Activated naive CD8-positive, alpha-beta T cell treated with anti-CD3 and anti-CD28 coated beads, Interleukin-2, amount 10 ng/mL, durations not matched to agents 7 days and 5 days (primary cell): ENCODE measurements at regions of chr6 and their contacts with region 1.

Region 1: DNA sequence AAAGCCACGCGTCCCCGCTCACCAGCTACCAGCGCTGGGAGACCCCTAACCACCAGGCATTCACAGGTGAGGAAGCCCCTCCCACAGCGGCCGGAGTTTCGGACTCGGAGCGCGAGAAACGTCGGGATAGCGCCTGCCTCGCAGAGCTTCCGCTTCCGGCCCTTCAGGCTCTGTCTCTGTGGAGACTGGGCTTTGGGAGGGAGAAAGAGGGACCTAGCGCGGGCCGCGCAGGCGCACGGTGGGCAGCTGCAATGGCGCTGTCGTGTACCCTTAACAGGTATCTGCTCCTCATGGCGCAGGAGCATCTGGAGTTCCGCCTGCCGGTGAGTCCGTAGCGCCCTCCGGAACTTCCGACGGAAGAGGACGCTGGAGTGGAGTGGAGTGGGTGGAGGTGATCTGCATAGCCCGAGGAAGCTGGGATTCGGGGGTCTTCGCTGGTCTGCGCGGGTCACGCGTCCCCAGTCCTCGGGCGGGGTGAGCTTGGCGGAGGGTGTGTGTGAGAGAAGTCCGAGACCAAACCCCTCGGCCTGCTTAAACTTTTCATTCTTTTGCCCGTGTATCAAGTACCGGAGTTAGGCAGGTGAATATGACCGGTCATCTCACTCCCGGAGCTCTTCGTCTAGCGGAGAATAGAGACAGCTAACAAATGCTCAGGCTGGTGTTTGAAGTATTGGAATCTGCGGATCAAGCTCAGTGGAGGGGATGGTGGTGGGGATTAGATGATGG is at the start of gene TRMT11:
- DNase-seq: peak; percentile 79
- ATAC-seq: peak; percentile 98
- H3K4me3 Mint-ChIP-seq: peak within 1 kb of the TSS; percentile 31
- H3K27ac Mint-ChIP-seq: no peak within 1 kb of the TSS
- H3K4me1 Mint-ChIP-seq: peaks cover 9% of the 10 kb centered on the region
- H3K27me3 Mint-ChIP-seq: no peaks in the 10 kb centered on the region
- total RNA-seq, gene TRMT11: 24.7 to 25.1 TPM

Region 2: GRCh38 chr6:125779924-125780539 is 206.4 kb before region 1 on chr6:
- POLR2A ChIA-PET with region 1: interaction called, 13 read pairs
- DNase-seq: peak; percentile 87
- ATAC-seq: peak; percentile 79
- H3K4me3 Mint-ChIP-seq: no peak overlapping the region
- H3K27ac Mint-ChIP-seq: no peak overlapping the region
- H3K4me1 Mint-ChIP-seq: peaks cover 10% of the 10 kb centered on the region
- H3K27me3 Mint-ChIP-seq: peaks cover 23% of the 10 kb centered on the region